Activated CD4-positive, alpha-beta T cell treated with anti-CD3 and anti-CD28 coated beads for 36 hours (primary cell): ENCODE measurements at regions of chr20 and their contacts with region 1.

Region 1: DNA sequence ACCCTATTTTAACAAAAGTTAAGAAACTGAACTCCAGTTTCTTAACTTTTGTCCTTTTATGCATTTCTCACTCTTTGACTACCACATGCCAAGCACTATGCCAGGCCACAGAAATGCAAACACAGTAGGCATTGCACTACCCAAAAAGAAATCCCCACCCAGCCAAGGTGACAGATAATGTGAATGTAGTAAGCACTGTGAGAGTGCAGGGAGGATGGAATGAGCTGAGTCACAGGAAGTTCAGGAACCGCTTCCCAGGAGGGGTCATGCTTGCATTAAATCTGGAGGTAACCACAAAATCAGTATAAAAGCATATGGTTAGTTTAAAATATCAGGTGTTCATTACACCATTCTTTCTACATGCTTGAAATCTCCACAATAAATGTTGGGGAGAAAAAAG is 20.1 kb upstream of the FAM83C start:
- DNase-seq: peak; percentile 62
- ATAC-seq: peak; percentile 74
- H3K4me3 Mint-ChIP-seq: no peak overlapping the region
- H3K27ac Mint-ChIP-seq: peak overlapping the region; percentile 83
- H3K4me1 Mint-ChIP-seq: peaks cover 57% of the 10 kb centered on the region
- H3K27me3 Mint-ChIP-seq: no peaks in the 10 kb centered on the region

Region 2: DNA sequence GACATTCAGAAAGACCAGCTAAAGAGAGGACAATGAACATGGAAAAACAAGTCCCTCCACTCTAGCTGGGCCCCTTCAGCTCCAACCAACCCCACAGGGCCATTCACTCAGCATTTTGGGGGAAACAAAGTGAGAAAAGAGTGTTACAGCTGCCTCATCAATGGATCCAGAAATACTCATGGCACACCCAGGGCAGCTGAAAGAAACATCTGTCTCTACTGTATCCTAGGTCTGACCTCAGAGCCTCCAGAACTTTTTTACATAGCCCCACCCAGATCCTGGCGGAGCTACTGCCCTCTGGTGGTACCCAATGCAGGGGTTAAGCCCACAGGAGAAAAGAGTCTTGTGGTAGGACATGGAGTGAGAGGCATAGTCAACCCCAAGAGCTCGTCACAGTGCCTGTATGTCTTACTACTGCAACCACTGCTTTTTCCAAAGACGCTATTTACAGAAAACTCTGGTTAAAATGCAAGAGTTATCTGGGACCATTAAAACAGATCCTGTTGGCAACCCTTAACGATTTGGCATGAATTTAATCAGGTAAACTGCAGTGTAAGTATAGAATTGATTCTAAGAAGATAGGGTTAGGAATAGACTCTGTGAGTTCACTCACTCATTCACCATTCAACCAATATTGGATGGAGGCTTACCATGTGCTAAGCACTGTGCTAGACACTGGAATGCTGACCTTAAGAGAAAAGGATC is 17.2 kb after region 1 on chr20:
- CTCF ChIA-PET with region 1: interaction called, 109 read pairs
- POLR2A ChIA-PET with region 1: no interaction called
- intact Hi-C with region 1: loop called (anchors 2 kb)
- DNase-seq: peak; percentile 83
- ATAC-seq: peak; percentile 82
- H3K4me3 Mint-ChIP-seq: no peak overlapping the region
- H3K27ac Mint-ChIP-seq: peak overlapping the region; percentile 80
- H3K4me1 Mint-ChIP-seq: peaks cover 52% of the 10 kb centered on the region
- H3K27me3 Mint-ChIP-seq: no peaks in the 10 kb centered on the region